ENCODE measurements at regions of chr21 and their contacts with region 1.

Region 1: GRCh38 chr21:37009740-37010341 is 3.3 kb downstream of the RIPPLY3 start:
- DNase-seq: peak; percentile 62 to 68
- ATAC-seq: peak; percentile 95 to 98
- H3K4me3 ChIP-seq: peak overlapping the region in 3 of 4 donors; percentile 23 to 40 (median 33)
- H3K27ac ChIP-seq: no peak overlapping the region
- H3K4me1 ChIP-seq: peaks cover 3 to 11% of the 10 kb centered on the region in 2 donors
- H3K27me3 ChIP-seq: peaks cover 25 to 34% (median 32%) of the 10 kb centered on the region in 3 donors
- CTCF ChIP-seq: peak; percentile 61 to 84 (median 73)
- POLR2A ChIP-seq: no peak

Region 2: GRCh38 chr21:36297921-36298594 is 711.8 kb before region 1 on chr21:
- in situ Hi-C with region 1: no loop called
- intact Hi-C with region 1: no loop called
- DNase-seq: peak; percentile 37 to 46
- ATAC-seq: peak; percentile 36 to 63
- H3K4me3 ChIP-seq: no peak overlapping the region
- H3K27ac ChIP-seq: no peak overlapping the region
- H3K4me1 ChIP-seq: no peaks in the 10 kb centered on the region
- H3K27me3 ChIP-seq: no peaks in the 10 kb centered on the region
- CTCF ChIP-seq: no peak
- POLR2A ChIP-seq: peak; percentile 17 to 39

Region 3: GRCh38 chr21:36727866-36728265 is 282.0 kb before region 1 on chr21:
- in situ Hi-C with region 1: no loop called
- intact Hi-C with region 1: no loop called
- DNase-seq: no peak
- ATAC-seq: no peak
- H3K4me3 ChIP-seq: no peak overlapping the region
- H3K27ac ChIP-seq: no peak overlapping the region
- H3K4me1 ChIP-seq: no peaks in the 10 kb centered on the region
- H3K27me3 ChIP-seq: peaks cover 0 to 18% (median 4%) of the 10 kb centered on the region in 3 donors
- CTCF ChIP-seq: no peak
- POLR2A ChIP-seq: no peak

Region 4: GRCh38 chr21:36934864-36935420 is 74.9 kb before region 1 on chr21:
- in situ Hi-C with region 1: no loop called
- intact Hi-C with region 1: loop called (anchors 5 kb)
- DNase-seq: no peak
- ATAC-seq: no peak
- H3K4me3 ChIP-seq: no peak overlapping the region
- H3K27ac ChIP-seq: no peak overlapping the region
- H3K4me1 ChIP-seq: peaks cover 23 to 31% of the 10 kb centered on the region in 2 donors
- H3K27me3 ChIP-seq: no peaks in the 10 kb centered on the region
- CTCF ChIP-seq: no peak
- POLR2A ChIP-seq: no peak

Region 5: DNA sequence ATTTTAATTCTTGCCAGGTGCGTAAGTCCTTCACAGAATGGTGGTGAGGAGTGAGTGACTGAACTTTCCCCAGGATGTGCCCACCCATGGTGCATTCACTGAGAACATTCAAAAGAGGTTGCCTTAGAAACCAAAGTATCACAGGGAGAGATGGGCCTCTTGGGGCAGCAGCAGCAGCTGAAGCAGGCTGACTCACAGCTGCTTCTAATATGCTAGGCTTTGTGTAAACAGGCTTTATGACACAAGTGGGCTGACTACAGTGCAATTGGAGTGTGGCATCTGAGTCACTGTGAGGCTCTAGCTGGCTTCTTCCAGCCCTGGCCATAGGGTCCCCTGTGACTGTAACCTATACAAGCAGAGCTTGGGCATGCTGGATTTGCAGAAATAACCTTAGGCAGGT is 50.5 kb after region 1 on chr21:
- in situ Hi-C with region 1: no loop called
- intact Hi-C with region 1: no loop called
- DNase-seq: peak in 1 of 2 donors; percentile 41
- ATAC-seq: peak; percentile 75 to 81
- H3K4me3 ChIP-seq: no peak overlapping the region
- H3K27ac ChIP-seq: no peak overlapping the region
- H3K4me1 ChIP-seq: no peaks in the 10 kb centered on the region
- H3K27me3 ChIP-seq: no peaks in the 10 kb centered on the region
- CTCF ChIP-seq: no peak
- POLR2A ChIP-seq: no peak